ENCODE measurements at regions of chr17 and their contacts with region 1.

Region 1: GRCh38 chr17:46822388-46822921 is 4.0 kb upstream of the WNT3 start:
- DNase-seq: no peak
- ATAC-seq: peak; percentile 70
- H3K4me3 ChIP-seq: no peak overlapping the region
- H3K27ac ChIP-seq: no peak overlapping the region
- H3K4me1 ChIP-seq: no peaks in the 10 kb centered on the region
- H3K27me3 ChIP-seq: peaks cover 22 to 32% of the 10 kb centered on the region in 2 experiments
- CTCF ChIP-seq: peak; percentile 61 to 88 (median 69)
- EP300 ChIP-seq: no peak
- POLR2A ChIP-seq: no peak
- RAD21 ChIP-seq: peak; percentile 38

Region 2: DNA sequence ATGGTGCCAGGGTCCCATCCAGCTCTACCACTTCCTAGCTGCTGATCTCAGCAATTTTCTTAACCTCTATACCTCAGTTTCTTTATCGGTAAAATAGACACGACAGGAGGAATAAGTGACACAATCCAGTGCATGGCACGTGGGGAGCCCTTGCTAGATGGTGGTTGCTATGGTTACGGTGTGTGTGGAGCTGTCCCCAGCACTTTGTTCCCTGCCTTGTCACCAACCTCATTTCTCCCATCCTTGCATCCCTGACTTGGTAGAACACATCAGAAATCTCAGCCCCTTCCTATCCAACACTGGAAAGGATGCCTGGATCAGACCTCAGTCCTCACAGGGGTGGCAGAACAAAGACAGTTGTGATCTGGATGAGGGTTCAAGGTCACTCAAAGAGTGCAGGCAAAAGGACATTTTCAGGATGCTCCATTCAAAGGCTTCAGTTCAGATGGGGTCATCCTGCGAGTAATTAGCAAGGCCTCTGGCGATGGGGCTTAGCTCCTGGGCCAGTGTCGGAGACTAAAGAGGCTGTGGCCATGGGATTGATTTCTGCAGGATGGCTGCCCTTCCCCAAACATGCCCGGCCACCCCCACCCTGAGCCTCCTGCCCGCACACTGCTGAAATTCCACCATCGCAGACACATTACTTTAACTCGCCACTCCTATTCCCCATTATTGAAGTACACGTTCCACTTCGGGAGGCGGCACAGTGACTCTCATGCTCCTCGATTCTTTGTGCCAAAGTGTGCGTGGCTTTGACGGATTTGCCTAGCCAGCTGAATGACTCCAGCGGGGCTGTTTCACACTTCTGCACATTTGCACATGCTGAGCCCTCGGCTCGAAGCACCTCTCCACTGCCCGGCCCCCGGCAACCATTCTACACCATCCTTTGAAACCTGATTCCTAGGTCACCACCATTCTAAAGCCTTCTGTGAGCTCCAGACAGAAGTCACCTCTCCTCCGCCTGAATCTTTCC is 44.2 kb before region 1 on chr17:
- CTCF ChIA-PET with region 1: no interaction called
- POLR2A ChIA-PET with region 1: no interaction called
- RAD21 ChIA-PET with region 1: no interaction called
- SMC1A ChIA-PET with region 1: no interaction called
- in situ Hi-C with region 1: no loop called
- intact Hi-C with region 1: no loop called
- DNase-seq: no peak
- ATAC-seq: no peak
- H3K4me3 ChIP-seq: no peak overlapping the region
- H3K27ac ChIP-seq: no peak overlapping the region
- H3K4me1 ChIP-seq: no peaks in the 10 kb centered on the region
- H3K27me3 ChIP-seq: peaks cover under 1 to 2% of the 10 kb centered on the region in 2 experiments; a peak in 3 of 4 replicates
- CTCF ChIP-seq: no peak
- EP300 ChIP-seq: no peak
- POLR2A ChIP-seq: no peak
- RAD21 ChIP-seq: no peak

Region 3: GRCh38 chr17:46832945-46833839 is 10.7 kb after region 1 on chr17:
- CTCF ChIA-PET with region 1: interaction called, 10 read pairs
- POLR2A ChIA-PET with region 1: no interaction called
- RAD21 ChIA-PET with region 1: interaction called, 4 read pairs
- SMC1A ChIA-PET with region 1: interaction called, 4 read pairs
- in situ Hi-C with region 1: no loop called
- intact Hi-C with region 1: no loop called
- DNase-seq: no peak
- ATAC-seq: no peak
- H3K4me3 ChIP-seq: no peak overlapping the region
- H3K27ac ChIP-seq: no peak overlapping the region
- H3K4me1 ChIP-seq: no peaks in the 10 kb centered on the region
- H3K27me3 ChIP-seq: no peaks in the 10 kb centered on the region
- CTCF ChIP-seq: no peak
- EP300 ChIP-seq: no peak
- POLR2A ChIP-seq: no peak
- RAD21 ChIP-seq: no peak

Region 4: DNA sequence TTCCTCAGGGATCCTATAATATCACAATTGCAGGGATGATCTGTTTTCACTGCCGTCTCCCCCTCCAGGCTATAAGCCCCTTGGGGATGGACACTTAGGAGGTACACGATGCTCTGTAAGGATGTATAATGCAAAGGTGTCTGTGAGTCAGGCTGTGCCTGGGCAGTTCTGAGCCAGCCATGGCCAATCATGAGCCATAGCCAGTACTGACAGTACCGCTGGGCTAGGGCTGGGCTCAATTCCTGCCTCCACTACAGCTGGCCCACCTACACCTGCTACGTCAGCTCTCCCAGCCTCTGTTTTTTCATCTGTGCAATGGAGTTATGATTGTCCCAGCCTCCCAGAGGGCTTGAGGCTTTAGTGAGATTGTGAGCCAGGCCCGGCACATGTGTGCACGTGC is 26.1 kb after region 1 on chr17:
- CTCF ChIA-PET with region 1: no interaction called
- POLR2A ChIA-PET with region 1: no interaction called
- RAD21 ChIA-PET with region 1: no interaction called
- SMC1A ChIA-PET with region 1: no interaction called
- in situ Hi-C with region 1: no loop called
- intact Hi-C with region 1: no loop called
- DNase-seq: no peak
- ATAC-seq: no peak
- H3K4me3 ChIP-seq: no peak overlapping the region
- H3K27ac ChIP-seq: no peak overlapping the region
- H3K4me1 ChIP-seq: no peaks in the 10 kb centered on the region
- H3K27me3 ChIP-seq: peaks cover 9 to 13% of the 10 kb centered on the region in 2 experiments
- CTCF ChIP-seq: no peak
- EP300 ChIP-seq: no peak
- POLR2A ChIP-seq: no peak
- RAD21 ChIP-seq: no peak

Region 5: GRCh38 chr17:46876353-46876887 is 54.0 kb after region 1 on chr17:
- CTCF ChIA-PET with region 1: no interaction called
- POLR2A ChIA-PET with region 1: no interaction called
- RAD21 ChIA-PET with region 1: no interaction called
- SMC1A ChIA-PET with region 1: no interaction called
- in situ Hi-C with region 1: no loop called
- intact Hi-C with region 1: loop called (anchors 10 kb)
- DNase-seq: no peak
- ATAC-seq: peak; percentile 93
- H3K4me3 ChIP-seq: no peak overlapping the region
- H3K27ac ChIP-seq: no peak overlapping the region
- H3K4me1 ChIP-seq: no peaks in the 10 kb centered on the region
- H3K27me3 ChIP-seq: no peaks in the 10 kb centered on the region
- CTCF ChIP-seq: peak; percentile 40 to 48 (median 46)
- EP300 ChIP-seq: no peak
- POLR2A ChIP-seq: no peak
- RAD21 ChIP-seq: no peak

Measured in GM12878 (cell line).